HEK293T (cell line): ENCODE measurements at regions of chr22 and their contacts with region 1.

Region 1: DNA sequence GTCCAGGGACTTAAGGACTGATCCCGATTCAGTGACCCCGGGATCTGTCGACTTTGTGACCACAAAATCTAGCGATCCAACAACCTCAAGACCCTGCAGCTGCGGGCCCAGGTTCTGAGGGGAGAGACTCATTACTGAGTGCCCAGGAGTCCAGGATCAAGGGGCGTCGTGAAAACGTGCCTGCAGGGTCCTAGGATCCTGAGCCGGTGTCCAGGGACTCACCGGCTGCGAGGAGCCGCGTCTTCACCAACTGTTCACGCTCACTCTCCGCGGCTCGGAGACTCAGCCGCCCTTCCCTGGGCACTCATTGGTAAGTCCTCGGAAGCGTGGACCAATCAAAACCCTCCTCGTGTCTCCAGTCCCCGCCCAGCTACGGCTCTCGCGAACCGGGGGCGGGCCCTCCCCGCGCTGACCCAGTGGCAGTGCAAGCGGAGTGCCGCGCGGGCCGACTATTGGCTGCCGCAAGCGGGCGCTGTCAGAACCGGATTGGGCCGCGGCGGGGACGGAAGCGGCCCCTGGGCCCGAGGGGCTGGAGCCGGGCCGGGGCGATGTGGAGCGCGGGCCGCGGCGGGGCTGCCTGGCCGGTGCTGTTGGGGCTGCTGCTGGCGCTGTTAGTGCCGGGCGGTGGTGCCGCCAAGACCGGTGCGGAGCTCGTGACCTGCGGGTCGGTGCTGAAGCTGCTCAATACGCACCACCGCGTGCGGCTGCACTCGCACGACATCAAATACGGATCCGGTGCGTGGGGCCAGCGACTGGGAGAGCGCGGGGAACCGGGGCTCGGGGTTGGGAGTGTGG is at the start of gene SDF2L1:
- DNase-seq: peak; percentile 98

Region 2: DNA sequence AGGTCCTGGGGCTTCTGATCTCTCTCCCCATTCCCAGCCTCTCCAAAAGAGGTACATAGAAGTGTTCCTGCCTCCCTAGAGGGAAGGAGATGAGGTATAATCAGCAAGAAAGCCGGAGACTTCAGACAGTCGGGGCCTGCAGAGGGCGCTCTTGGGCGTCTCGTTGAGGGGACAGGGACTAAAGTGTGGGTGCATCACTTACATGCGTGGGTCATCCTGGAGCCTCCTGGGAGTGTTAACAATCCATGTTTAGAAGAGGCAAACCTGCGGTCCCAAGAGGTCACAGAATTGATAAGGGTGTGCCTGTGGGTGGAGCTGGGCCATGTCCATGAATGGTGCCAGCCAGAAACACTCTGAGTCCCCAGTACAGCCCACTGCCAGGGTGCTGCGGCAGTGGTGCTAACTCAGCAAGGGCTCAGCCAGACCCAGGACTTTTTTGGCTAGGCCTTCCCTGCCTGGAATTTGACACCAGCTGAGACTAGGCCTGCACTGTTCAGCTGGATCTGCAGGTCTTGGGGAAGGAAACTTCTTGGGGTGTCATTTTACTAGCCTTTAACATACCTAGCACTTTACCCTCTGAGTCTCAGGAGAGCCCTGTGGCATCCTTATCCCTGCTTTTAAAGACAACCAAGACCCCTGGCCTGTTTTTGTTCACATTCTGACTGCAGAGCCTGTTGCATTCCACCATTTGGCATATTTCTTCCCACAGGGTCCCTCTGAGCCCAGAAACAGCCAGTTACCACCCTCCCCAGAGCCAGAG is 17.7 kb before region 1 on chr22:
- CTCF ChIA-PET with region 1: interaction called, 63 read pairs
- POLR2A ChIA-PET with region 1: interaction called, 76 read pairs
- DNase-seq: peak; percentile 62

Region 3: DNA sequence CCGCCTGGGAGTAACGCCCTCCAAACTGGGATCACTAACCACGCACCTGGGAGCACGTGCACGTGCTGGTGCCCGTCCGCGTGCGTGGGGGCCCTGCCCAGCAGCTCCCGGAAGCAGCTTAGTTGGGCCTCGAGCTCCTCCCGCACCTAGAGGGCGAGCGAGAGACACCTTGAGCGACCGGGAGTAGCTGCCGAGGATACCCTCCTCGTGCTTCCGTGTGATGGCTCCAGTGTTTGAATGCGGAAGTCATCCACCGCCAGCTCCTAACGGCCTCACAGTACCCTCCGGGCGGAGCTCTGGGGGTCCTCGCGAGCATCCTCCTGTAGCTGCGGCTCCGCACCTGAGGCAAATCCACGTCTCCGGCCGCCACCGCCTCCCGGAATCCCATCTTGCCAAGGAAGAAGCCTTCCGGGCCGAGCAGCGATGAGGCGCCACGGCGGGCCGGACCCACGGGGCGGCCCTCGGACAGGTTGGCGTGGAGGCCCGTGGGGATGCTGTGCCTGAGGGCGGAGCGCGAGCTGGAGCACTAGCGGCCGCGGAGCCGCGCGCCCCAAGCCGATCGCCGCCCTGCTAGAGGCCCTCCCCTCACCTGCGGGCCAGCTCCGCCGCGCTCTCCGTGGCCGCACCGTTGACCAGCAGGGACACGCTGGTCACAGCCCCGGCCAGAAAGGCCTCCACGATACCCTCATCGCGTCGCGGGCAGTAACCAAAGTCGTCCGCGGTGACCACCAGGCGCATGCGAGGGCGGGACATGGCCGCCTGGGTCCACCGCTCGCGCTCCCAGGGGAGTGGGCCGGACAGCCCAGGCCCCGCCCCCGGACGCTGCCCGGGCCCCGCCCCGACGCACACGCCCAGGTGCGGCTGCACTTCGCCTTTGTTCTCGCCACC is 12.5 kb before region 1 on chr22 and contains the start of gene YDJC:
- CTCF ChIA-PET with region 1: interaction called, 63 read pairs
- POLR2A ChIA-PET with region 1: interaction called, 76 read pairs
- DNase-seq: peak; percentile 98

Region 4: DNA sequence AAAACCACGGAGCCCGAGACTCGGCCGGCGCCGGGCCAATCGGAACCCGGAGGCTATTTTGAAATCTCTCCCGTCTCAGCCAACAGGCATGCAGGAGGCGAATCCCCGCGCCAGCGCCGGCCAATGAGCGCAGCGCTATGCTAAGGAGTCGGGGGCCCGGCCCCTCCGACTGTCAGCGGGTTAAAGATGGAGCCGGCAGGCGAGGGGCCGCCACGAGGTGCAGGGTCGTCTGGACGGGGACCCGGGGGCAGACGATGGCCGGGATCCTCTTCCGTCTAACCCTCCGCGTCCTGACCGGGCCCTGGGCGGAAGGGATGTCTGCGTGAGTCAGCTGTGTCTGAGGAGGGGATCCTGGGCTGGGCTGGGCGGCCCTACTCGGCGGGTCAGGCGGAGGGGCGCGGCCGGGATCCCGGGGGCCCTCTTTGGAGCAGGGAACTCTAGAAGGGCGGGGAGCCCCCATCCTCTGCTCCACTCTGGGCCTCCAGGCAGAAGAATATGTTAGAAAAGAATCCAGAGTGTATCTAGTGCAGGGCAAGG is 10.1 kb after region 1 on chr22:
- CTCF ChIA-PET with region 1: interaction called, 11 read pairs
- POLR2A ChIA-PET with region 1: interaction called, 27 read pairs
- DNase-seq: peak; percentile 93

Region 5: DNA sequence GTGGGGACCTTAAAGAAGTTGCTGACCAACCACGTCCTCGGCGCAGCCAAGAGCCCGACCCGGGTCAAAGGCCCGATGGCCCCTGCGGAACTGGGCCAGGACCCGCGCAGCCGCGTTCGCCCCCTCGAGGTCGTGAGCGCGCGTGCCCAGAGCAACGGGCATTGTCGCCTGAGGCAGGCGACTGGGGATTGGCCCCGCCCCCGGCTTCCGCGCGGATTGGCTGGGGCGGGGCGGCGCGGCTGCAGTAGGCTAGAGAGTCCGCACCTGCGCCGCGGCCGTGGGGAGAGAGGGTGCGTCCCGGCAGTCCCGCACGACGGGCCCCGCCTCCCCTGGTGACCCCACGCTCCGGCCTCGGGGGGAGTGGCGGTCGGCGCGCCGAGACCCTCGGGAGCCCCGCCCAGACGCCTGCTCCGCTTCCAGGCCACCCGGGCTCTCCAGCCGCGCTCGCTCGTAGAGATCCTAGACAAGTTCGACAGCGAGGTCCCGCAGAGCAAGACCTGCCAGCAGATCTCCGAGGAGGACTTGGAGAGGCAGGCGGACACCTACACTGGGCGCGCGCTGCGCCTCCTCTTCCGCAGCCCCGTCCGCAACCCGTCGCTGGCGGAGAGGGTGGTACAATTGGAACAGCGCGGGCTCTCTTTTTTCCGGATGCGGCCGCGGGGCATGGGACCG is 15.5 kb after region 1 on chr22:
- CTCF ChIA-PET with region 1: interaction called, 11 read pairs
- POLR2A ChIA-PET with region 1: interaction called, 27 read pairs
- DNase-seq: peak; percentile 87